ENCODE measurements at regions of chr22 and their contacts with region 1.

Region 1: GRCh38 chr22:22422629-22423112 is 85.9 kb downstream of the ZNF280B start:
- DNase-seq: peak; percentile 5 to 66 (median 37)
- ATAC-seq: peak; percentile 86
- H3K4me3 ChIP-seq: no peak overlapping the region
- H3K4me3 Mint-ChIP-seq: no peak overlapping the region
- H3K27ac ChIP-seq: no peak overlapping the region
- H3K27ac Mint-ChIP-seq: no peak overlapping the region
- H3K4me1 ChIP-seq: no peaks in the 10 kb centered on the region
- H3K4me1 Mint-ChIP-seq: peaks cover 0 to 6% (median 0%) of the 10 kb centered on the region in 7 donors
- H3K27me3 ChIP-seq: no peaks in the 10 kb centered on the region
- H3K27me3 Mint-ChIP-seq: peaks cover 6 to 45% (median 33%) of the 10 kb centered on the region in 5 donors

Region 2: DNA sequence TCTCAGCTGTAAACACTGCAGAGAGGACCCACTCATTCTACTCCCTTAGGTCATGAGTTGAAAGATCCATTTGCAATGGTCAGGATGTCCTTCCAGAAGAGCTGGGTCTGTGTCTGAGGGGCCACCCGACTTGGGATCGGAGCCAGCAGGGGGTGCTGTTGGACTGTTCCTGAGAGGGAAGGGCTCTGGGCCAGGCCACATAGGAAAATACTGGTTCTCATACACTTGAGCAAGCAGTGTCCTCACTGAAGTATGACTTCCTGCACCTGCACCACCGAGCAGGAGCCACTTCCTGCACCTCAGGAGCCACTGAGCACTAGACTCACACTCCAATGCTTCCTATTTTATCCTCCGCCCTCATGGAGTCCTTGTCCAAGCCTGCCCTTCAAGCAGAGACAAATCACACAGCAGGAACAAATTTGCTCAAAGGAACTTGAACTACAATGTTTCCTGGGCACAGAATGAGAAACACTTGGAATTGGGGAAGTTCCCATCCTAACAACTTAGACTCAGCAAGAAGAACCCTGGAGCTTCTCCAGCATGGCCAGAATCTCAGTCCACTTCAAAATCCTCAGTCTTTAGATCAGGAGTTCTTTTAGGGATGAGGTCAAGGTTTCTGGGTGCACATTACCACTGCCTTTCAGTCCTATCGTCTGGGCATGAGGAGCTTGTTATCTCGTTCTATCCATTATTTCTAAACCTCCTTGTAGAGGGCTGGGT is 214.7 kb before region 1 on chr22:
- CTCF ChIA-PET with region 1: no interaction called
- POLR2A ChIA-PET with region 1: no interaction called
- intact Hi-C with region 1: loop called (anchors 1 to 2 kb)
- DNase-seq: peak; percentile 37 to 87 (median 63)
- ATAC-seq: peak; percentile 90
- H3K4me3 ChIP-seq: no peak overlapping the region
- H3K4me3 Mint-ChIP-seq: peak overlapping the region in 6 of 10 donors; percentile 3 to 64 (median 50)
- H3K27ac ChIP-seq: no peak overlapping the region
- H3K27ac Mint-ChIP-seq: peak overlapping the region in 8 of 9 donors; percentile 11 to 75 (median 38)
- H3K4me1 ChIP-seq: peaks cover 4 to 9% of the 10 kb centered on the region in 2 donors
- H3K4me1 Mint-ChIP-seq: peaks cover 9 to 35% (median 28%) of the 10 kb centered on the region in 7 donors
- H3K27me3 ChIP-seq: no peaks in the 10 kb centered on the region
- H3K27me3 Mint-ChIP-seq: peaks cover 0 to 4% (median 0%) of the 10 kb centered on the region in 5 donors

Region 3: DNA sequence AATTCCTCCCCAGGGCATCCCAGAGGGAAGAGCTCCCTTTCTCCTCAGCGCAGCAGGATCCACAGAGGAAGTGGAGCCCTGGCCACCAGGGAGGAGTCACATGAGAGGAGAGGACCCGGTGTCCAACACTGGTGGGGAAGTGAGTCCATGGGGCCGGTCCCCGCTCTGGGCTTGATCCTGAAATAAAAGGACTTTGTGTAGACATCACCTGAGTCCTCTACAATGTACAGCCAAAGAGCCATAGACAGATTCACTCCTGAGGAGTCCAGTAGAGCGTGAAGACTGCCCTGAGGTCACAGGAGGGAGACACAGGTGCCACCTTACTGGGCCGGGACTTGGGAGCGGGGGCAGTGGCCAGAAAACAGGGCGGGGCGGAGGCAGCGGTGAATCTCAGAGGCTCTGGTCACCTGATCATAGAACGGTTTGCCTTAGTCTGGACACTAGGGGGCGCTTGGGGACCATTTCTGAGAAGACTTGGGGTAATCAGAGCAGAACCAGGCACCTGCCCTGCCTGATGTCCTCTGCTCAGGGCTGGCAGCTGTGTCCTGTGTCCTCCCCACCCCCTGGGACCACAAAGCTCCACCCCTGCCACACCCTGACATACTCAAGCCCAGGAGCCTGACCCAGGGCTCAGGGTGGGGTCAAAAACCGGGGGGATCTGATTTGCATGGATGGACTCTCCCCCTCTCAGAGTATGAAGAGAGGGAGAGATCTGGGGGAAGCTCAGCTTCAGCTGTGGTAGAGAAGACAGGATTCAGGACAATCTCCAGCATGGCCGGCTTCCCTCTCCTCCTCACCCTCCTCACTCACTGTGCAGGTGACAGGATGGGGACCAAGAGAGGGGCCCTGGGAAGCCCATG is 65.4 kb before region 1 on chr22:
- CTCF ChIA-PET with region 1: no interaction called
- POLR2A ChIA-PET with region 1: no interaction called
- intact Hi-C with region 1: loop called in 1 of 2 experiments (anchors 10 kb)
- DNase-seq: peak; percentile 29 to 80 (median 48)
- ATAC-seq: peak; percentile 88
- H3K4me3 ChIP-seq: no peak overlapping the region
- H3K4me3 Mint-ChIP-seq: peak overlapping the region in 1 of 10 donors; percentile 18
- H3K27ac ChIP-seq: no peak overlapping the region
- H3K27ac Mint-ChIP-seq: peak overlapping the region in 1 of 9 donors; percentile 74
- H3K4me1 ChIP-seq: no peaks in the 10 kb centered on the region
- H3K4me1 Mint-ChIP-seq: peaks cover 0 to 9% (median 6%) of the 10 kb centered on the region in 7 donors
- H3K27me3 ChIP-seq: peaks cover 0 to 4% of the 10 kb centered on the region in 2 donors
- H3K27me3 Mint-ChIP-seq: peaks cover 45 to 59% (median 50%) of the 10 kb centered on the region in 5 donors

Region 4: DNA sequence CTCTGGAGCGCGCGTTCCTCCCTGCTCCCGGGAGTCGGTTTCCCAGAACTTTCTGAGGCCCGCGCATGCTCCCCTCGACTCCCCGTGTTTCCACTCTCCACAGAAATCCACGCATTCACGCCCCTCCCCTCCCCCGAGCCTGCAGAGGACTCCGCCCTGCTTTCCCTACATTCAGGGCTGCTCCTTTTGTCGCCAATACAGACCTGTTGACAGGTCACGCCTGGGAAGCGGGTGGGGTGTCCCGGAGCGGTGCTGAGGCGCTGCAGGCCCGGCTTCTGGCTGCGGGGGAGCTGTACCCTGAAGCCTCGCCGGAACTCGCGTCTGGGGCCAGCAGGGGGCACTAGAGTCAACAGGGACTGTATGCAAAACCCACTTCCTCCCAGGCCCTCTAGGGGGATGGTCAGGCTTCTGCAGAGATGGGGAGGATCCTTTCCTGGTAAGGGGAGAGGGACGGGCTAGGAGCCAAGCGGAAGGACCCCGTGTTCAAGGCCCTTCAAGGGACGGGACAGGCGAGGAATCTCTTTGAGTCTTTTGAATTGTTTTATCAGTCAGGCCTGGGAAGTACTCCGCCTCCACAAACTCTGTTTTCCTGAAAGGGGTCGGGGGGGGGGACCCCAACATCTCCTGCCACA is 136.4 kb after region 1 on chr22 and contains the start of gene PRAME:
- CTCF ChIA-PET with region 1: no interaction called
- POLR2A ChIA-PET with region 1: no interaction called
- intact Hi-C with region 1: no loop called
- DNase-seq: peak; percentile 41 to 73 (median 60)
- ATAC-seq: peak; percentile 92
- H3K4me3 ChIP-seq: no peak within 1 kb of the TSS
- H3K4me3 Mint-ChIP-seq: no peak within 1 kb of the TSS
- H3K27ac ChIP-seq: peak within 1 kb of the TSS; percentile 27
- H3K27ac Mint-ChIP-seq: peak within 1 kb of the TSS in 2 of 9 donors; percentile 43 to 49
- H3K4me1 ChIP-seq: peaks cover 0 to 4% of the 10 kb centered on the region in 2 donors
- H3K4me1 Mint-ChIP-seq: peaks cover 0 to 4% (median 0%) of the 10 kb centered on the region in 7 donors
- H3K27me3 ChIP-seq: no peaks in the 10 kb centered on the region
- H3K27me3 Mint-ChIP-seq: peaks cover 0 to 10% (median 0%) of the 10 kb centered on the region in 5 donors
- total RNA-seq, gene PRAME: not detected

Region 5: DNA sequence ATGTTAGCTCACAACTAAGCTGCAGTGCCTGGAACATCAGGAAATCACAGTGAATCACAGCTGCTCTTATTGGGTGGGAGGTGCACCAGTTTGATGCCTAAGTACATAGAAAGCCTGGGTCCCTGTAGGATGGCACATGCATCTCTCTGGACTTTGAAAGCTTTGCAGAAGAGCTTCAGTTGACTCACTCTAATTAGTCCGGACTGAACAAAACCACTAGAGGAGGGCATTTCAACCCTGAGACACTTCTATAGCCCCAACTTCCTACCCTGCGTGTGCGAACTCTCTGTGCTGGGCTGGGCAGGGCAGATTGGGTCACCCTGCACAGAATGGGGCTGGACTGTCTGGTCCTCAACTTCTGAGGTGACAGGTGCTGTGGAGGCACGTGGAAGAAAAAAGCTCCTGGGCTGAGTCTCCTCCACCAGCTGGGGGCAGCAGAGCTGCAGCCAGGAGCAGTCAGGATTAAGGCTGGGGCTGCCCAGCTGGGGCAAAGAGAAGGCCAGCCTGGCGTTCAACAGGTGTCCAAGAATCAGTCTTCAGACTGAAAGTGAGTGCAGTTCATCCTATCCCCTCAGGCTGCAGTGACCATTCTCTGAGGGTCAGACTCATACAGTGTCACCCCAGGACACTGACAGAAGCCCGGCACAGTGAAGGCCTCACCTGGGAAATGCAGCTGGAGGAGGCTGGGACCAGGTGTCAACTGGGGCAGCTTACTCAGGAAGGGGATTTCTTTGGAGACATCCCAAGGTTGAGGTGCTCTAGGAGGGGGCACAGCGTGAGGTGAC is 243.8 kb after region 1 on chr22:
- CTCF ChIA-PET with region 1: no interaction called
- POLR2A ChIA-PET with region 1: no interaction called
- intact Hi-C with region 1: no loop called
- DNase-seq: no peak
- ATAC-seq: peak; percentile 52
- H3K4me3 ChIP-seq: no peak overlapping the region
- H3K4me3 Mint-ChIP-seq: no peak overlapping the region
- H3K27ac ChIP-seq: no peak overlapping the region
- H3K27ac Mint-ChIP-seq: peak overlapping the region in 1 of 9 donors; percentile 36
- H3K4me1 ChIP-seq: no peaks in the 10 kb centered on the region
- H3K4me1 Mint-ChIP-seq: no peaks in the 10 kb centered on the region
- H3K27me3 ChIP-seq: no peaks in the 10 kb centered on the region
- H3K27me3 Mint-ChIP-seq: peaks cover 0 to 16% (median 0%) of the 10 kb centered on the region in 5 donors